Mammary epithelial cell (primary cell): ENCODE measurements at regions of chr19 and their contacts with region 1.

Region 1: DNA sequence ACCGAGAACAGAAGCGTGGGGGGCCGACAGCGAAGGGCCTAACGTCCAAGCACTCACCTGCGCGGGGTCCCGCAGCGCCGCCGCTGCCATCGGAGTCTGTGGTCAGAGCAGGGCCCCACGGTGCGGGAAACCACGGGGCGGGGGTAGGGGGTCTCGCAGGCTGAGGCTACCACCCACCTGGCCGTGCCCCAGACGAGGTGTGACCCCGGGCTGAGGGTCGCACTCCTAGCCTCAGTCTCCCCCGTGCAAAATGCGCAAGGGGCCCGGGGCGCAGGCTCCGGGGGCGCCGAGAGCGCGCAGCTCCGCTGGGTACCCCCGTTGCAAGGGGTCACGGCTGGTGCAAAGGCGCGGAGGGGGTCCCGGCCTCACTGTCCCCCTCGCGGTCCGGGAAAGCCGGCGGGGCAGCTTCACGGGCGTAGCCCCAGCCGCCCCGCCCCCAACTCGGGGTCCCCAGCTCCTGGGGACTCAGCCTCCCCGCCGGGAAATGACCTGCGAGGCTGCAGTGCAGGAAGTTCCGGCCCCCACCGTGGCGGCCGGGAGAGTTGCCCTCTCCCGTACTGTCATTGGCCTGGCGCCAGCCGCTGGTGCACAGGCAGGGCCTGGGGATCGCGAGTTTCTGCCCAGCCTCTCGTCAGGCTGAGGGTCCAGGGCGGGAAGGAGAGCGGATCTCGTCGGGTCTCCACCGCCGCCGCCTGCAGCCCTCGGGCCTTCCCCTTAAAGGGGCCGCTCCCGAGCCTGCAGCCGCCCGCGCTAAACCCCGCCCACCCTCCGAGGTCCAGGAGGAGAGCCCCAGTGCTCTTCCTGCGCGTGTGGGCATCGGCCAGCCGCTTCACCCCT is at the start of gene ZNF792:
- DNase-seq: peak; percentile 35
- H3K4me3 ChIP-seq: peak within 1 kb of the TSS; percentile 72 to 87 (median 85)
- H3K27ac ChIP-seq: no peak within 1 kb of the TSS
- H3K4me1 ChIP-seq: peaks cover 4% of the 10 kb centered on the region
- H3K27me3 ChIP-seq: no peaks in the 10 kb centered on the region
- CTCF ChIP-seq: no peak
- total RNA-seq, gene ZNF792: 2.2 to 4.7 TPM

Region 2: DNA sequence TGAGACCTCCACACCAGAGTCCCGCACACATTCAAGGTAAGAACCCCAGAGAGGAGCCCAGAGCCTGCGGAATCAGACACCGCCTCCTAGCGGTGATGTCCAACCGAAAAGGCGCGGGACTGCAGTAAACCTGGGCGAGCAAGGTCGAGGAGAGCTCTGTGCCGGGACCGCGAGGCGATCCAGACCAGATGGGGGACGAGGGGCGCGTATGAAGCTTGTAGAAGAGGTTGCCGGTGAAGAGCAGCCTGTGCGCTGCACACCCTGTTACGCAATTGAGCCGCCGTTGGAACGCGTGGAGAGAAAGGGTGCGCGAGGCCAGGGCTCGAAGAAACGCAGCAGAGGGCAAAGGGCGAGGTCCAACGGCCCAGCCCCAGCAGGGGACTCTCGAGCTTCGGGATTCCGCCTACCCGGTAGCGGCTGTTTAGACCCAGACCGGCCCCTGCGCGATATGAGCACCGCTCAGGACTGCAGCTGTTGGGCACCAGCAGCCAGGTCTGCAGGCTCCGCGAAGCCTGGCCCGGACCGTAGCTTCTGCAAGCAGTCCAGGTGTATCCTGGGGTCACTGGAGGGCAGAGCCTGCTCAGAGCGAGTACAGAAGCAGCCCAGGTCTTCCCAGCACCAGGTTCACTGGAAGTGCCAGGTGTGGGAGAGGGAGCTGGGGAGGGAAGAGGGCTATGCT is 124.9 kb before region 1 on chr19:
- CTCF ChIA-PET with region 1: no interaction called
- dilution Hi-C with region 1: no loop called
- in situ Hi-C with region 1: no loop called
- intact Hi-C with region 1: loop called (anchors 10 kb)
- DNase-seq: peak; percentile 1
- H3K4me3 ChIP-seq: no peak overlapping the region
- H3K27ac ChIP-seq: no peak overlapping the region
- H3K4me1 ChIP-seq: no peaks in the 10 kb centered on the region
- H3K27me3 ChIP-seq: no peaks in the 10 kb centered on the region
- CTCF ChIP-seq: peak; percentile 13 to 55

Region 3: GRCh38 chr19:34943861-34944573 is 19.8 kb before region 1 on chr19:
- CTCF ChIA-PET with region 1: no interaction called
- dilution Hi-C with region 1: no loop called
- in situ Hi-C with region 1: no loop called
- intact Hi-C with region 1: no loop called
- DNase-seq: no peak
- H3K4me3 ChIP-seq: no peak overlapping the region
- H3K27ac ChIP-seq: no peak overlapping the region
- H3K4me1 ChIP-seq: no peaks in the 10 kb centered on the region
- H3K27me3 ChIP-seq: no peaks in the 10 kb centered on the region
- CTCF ChIP-seq: no peak